Posterior vena cava (tissue), 2 donors: ENCODE measurements at regions of chr10 and their contacts with region 1.

Region 1: DNA sequence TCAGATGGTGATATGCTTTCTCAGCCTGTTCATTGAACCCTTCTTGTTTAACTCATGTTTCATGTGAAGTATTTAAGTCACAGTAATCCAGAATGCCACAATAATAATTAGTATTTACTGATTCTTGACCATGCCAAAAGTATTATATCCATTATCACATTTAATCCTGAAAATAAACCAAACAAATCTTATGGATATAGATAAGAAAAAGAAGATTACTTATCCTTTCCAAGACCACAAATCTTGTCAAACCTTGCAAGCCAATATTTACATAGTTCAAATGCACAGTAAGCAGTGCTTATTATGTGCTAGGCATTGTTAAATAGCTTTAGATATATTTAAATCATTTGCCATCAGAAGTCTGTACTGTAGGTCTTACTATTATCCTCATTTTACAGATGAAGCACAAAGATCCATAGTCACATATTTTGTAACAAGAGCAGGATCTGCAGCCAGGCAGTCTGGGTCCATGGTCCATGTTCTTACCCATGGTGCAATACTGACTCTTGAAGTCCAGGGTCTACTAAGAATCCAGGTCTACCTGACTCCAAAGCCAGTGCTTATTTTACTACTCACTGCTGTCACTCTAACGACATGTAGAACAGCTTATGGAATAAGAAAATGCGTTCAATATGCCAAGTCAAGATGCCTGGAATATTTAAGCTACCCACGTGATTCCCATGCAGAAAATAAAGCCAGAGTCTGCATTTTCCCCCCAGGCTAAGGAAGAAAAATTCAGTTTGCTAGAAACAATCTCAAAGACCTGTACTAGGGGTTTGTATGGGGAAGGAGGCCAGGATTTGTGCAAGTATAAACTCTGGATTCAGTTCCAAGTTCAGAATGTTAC is 984.8 kb upstream of the LRRTM3 start:
- DNase-seq: no peak

Region 2: GRCh38 chr10:64773357-64773756 is 1167.7 kb before region 1 on chr10:
- intact Hi-C with region 1: loop called in 1 of 2 experiments (anchors 5 kb)
- DNase-seq: no peak

Region 3: GRCh38 chr10:65197935-65198334 is 743.1 kb before region 1 on chr10:
- intact Hi-C with region 1: loop called in 1 of 2 experiments (anchors 5 kb)
- DNase-seq: no peak